Naive thymus-derived CD4-positive, alpha-beta T cell (primary cell): ENCODE measurements at regions of chr10 and their contacts with region 1.

Region 1: DNA sequence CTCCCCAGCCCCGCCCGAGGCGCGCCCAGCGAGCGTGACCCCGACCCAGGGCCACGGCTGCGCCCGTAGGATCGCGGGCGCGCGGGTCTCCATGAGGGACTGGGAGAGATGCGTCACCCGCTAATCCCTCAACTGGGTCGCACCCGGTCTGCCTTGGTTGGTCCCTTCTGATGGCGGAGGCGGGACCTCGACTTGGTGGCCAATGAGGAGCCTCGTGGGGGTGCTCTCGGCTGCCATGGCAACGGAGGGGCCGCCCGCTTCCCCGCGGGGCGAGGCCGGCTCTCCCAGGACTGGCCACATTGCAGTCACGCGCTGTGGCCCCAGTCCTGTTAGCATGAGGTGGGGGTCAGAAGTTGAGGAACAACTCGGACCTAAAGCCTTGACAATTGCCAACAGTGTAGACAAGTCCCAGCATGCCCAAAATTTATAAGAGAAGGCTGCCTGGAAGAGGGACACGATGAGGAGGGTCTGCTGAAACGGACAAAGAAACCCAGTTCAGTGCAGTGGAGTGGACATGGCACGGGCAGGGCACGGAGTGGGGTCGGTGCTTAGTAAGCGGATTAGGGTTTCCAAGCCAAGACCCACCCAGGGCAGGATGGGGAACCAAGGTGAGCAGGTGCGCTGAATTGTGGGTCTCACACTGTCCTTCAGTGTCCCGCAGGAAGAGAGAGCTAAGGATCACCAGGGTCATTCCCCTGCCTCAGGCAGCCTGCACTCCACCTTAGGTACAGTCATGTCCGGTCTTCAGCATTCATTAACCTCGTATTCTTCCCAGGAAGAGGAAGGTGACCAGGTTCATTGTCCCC is 24.4 kb downstream of the DDIT4 start:
- DNase-seq: peak; percentile 68 to 90 (median 78)
- ATAC-seq: peak; percentile 76
- H3K4me3 ChIP-seq: peak overlapping the region; percentile 69
- H3K4me3 Mint-ChIP-seq: peak overlapping the region; percentile 27 to 89 (median 84)
- H3K27ac ChIP-seq: peak overlapping the region; percentile 80
- H3K27ac Mint-ChIP-seq: peak overlapping the region; percentile 97 to 100 (median 99)
- H3K4me1 ChIP-seq: peaks cover 29 to 30% of the 10 kb centered on the region in 2 donors
- H3K4me1 Mint-ChIP-seq: peaks cover 18 to 61% (median 55%) of the 10 kb centered on the region in 7 donors
- H3K27me3 ChIP-seq: no peaks in the 10 kb centered on the region
- H3K27me3 Mint-ChIP-seq: no peaks in the 10 kb centered on the region

Region 2: DNA sequence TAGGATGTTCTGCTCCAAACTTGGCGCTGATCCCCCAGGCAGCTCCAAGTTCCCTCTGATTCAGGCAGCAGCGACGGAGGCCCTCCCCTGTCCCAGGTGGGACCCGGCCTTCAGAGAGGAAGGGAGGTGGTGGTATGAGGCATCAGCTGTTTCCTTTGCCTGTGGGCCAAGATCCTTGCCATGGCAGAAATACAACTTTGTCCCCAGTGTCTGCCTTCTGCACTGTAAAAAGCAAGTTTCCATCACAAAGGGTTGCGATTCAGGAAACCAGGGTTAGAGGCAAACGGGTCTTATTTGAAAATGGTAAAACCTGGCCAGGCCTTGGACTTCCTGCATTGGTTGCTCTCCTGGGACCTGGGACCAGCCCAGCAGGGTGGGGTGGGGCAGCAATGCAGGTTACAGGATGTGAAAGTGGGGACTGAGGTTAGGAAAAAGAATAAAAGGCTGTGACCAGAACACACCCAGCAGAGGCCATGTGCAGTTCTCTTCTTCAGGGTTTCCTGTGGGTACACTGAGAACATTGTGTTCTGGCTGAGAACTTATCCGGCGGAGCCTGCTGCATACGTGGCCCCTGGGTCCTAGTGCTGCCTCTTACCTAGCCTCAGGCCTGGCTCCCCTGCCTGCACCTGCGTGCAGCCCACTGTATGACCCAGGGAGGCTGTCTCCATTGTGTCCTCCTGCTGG is 49.6 kb before region 1 on chr10:
- CTCF ChIA-PET with region 1: interaction called, 3 read pairs
- POLR2A ChIA-PET with region 1: interaction called, 3 read pairs
- intact Hi-C with region 1: loop called (anchors 1 kb)
- DNase-seq: peak; percentile 34 to 92 (median 83)
- ATAC-seq: peak; percentile 95
- H3K4me3 ChIP-seq: peak overlapping the region; percentile 59
- H3K4me3 Mint-ChIP-seq: peak overlapping the region; percentile 80 to 98 (median 84)
- H3K27ac ChIP-seq: peak overlapping the region; percentile 68
- H3K27ac Mint-ChIP-seq: peak overlapping the region; percentile 87 to 99 (median 96)
- H3K4me1 ChIP-seq: peaks cover 62 to 89% of the 10 kb centered on the region in 2 donors
- H3K4me1 Mint-ChIP-seq: peaks cover 63 to 89% (median 83%) of the 10 kb centered on the region in 7 donors
- H3K27me3 ChIP-seq: no peaks in the 10 kb centered on the region
- H3K27me3 Mint-ChIP-seq: no peaks in the 10 kb centered on the region

Region 3: DNA sequence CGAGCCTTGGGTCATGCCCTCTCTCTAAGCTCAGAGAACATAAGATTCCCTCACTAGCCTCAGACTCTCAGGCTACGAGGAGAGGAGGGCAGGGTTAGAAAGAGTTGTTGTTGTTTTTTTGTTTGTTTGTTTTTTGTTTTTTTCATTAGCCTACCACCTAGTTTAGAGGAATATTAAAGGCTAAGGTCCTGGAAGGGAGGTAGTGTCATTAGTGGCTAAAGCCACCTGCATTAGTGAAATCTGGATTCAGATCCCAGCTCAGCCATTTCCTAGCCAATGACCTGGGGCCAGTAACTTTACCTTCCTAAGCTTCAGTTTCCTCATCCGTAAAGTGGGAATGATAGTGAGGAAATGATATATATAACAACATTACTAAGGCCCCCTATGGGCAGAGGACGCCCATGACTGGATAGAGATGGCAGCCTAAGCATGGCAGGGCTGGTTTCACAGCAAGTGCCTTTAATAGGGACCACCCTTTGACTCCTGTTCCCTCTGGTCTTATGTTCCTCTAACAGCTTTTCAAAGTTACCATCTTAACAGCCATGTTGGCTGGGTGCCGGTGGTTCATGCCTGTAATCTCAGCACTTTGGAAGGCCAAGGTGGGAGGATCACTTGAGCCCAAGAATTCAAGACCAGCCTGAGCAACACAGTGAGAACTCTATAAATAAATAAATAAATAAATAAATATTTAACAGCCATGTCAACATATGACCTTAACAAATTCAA is 19.3 kb before region 1 on chr10:
- CTCF ChIA-PET with region 1: interaction called, 33 read pairs
- POLR2A ChIA-PET with region 1: interaction called, 93 read pairs
- intact Hi-C with region 1: loop called in 1 of 2 experiments (anchors 1 kb)
- DNase-seq: no peak
- ATAC-seq: no peak
- H3K4me3 ChIP-seq: no peak overlapping the region
- H3K4me3 Mint-ChIP-seq: peak overlapping the region in 4 of 10 donors; percentile 5 to 56 (median 30)
- H3K27ac ChIP-seq: no peak overlapping the region
- H3K27ac Mint-ChIP-seq: peak overlapping the region in 8 of 9 donors; percentile 21 to 95 (median 90)
- H3K4me1 ChIP-seq: peaks cover 9 to 14% of the 10 kb centered on the region in 2 donors
- H3K4me1 Mint-ChIP-seq: peaks cover 28 to 59% (median 51%) of the 10 kb centered on the region in 7 donors
- H3K27me3 ChIP-seq: no peaks in the 10 kb centered on the region
- H3K27me3 Mint-ChIP-seq: no peaks in the 10 kb centered on the region

Region 4: GRCh38 chr10:72308320-72308987 is 10.3 kb after region 1 on chr10:
- CTCF ChIA-PET with region 1: interaction called, 4 read pairs
- POLR2A ChIA-PET with region 1: interaction called, 172 read pairs
- intact Hi-C with region 1: no loop called
- DNase-seq: peak in 2 of 9 donors; percentile 12 to 47
- ATAC-seq: peak; percentile 65
- H3K4me3 ChIP-seq: no peak overlapping the region
- H3K4me3 Mint-ChIP-seq: peak overlapping the region in 7 of 10 donors; percentile 14 to 67 (median 49)
- H3K27ac ChIP-seq: peak overlapping the region; percentile 44
- H3K27ac Mint-ChIP-seq: peak overlapping the region; percentile 62 to 89 (median 80)
- H3K4me1 ChIP-seq: peaks cover 0 to 66% of the 10 kb centered on the region in 2 donors
- H3K4me1 Mint-ChIP-seq: peaks cover 43 to 89% (median 72%) of the 10 kb centered on the region in 7 donors
- H3K27me3 ChIP-seq: no peaks in the 10 kb centered on the region
- H3K27me3 Mint-ChIP-seq: no peaks in the 10 kb centered on the region